CD4-positive, alpha-beta T cell (primary cell): ENCODE measurements at regions of chr22 and their contacts with region 1.

Region 1: DNA sequence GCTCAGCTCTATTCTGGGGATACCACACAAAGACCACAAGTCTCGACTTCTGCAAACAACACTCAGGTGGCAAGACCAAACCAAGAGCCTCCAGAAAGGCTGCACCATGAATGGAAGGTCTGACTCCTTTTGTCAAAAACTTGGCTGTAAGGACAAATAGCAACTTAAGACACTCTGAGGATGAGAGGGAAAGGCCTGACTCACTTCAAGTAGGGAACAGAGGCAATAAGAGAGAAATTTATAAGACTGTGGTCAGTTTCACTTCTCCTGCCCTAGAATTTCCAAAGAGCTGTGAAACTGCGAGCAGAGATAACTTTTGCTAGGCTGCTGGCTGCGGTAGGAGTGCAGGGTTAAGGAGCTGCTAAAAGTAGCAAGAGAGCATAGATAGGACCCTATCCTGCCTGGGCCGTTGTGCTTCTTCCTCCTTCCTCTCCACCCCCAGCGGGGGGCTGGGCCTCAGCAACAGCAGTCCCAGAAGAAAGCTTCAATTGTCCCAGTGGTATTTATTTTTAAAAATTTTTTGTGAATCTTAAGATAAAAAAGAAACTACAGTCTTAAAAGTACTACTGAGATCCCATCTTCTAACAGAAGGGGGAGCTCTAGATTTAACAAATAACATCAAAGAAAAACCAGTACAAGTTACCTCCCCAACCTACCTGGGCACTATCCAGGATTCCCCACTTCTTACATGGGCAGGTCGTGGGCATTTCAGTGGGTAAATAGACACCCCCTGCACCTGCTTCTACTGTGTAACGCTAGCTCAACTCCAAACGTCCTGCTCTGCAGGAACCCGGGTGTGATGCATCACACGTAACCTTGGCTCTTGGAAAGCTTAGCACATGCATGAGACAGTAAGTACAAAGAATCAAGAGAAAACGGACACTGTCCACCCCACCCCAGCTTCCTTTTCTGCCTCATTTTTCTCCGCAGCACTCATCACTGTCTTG is 66.4 kb downstream of the SGSM3 start:
- DNase-seq: peak in 5 of 14 experiments; percentile 20 to 80 (median 69)
- ATAC-seq: peak; percentile 84
- H3K4me3 ChIP-seq: no peak overlapping the region
- H3K4me3 Mint-ChIP-seq: peak overlapping the region; percentile 23
- H3K27ac ChIP-seq: peak overlapping the region in 1 of 2 donors; percentile 40
- H3K27ac Mint-ChIP-seq: peak overlapping the region; percentile 78
- H3K4me1 ChIP-seq: peaks cover 24% of the 10 kb centered on the region
- H3K4me1 Mint-ChIP-seq: peaks cover 52% of the 10 kb centered on the region
- H3K27me3 ChIP-seq: no peaks in the 10 kb centered on the region
- H3K27me3 Mint-ChIP-seq: no peaks in the 10 kb centered on the region
- CTCF ChIP-seq: peak; percentile 85

Region 2: GRCh38 chr22:40463017-40463631 is 26.3 kb after region 1 on chr22:
- CTCF ChIA-PET with region 1: interaction called, 11 read pairs
- POLR2A ChIA-PET with region 1: interaction called, 17 read pairs
- intact Hi-C with region 1: no loop called
- DNase-seq: peak; percentile 10 to 73 (median 44)
- ATAC-seq: peak; percentile 81
- H3K4me3 ChIP-seq: peak overlapping the region; percentile 79
- H3K4me3 Mint-ChIP-seq: peak overlapping the region; percentile 96
- H3K27ac ChIP-seq: peak overlapping the region; percentile 76 to 78
- H3K27ac Mint-ChIP-seq: peak overlapping the region; percentile 98
- H3K4me1 ChIP-seq: peaks cover 49% of the 10 kb centered on the region
- H3K4me1 Mint-ChIP-seq: peaks cover 87% of the 10 kb centered on the region
- H3K27me3 ChIP-seq: no peaks in the 10 kb centered on the region
- H3K27me3 Mint-ChIP-seq: no peaks in the 10 kb centered on the region
- CTCF ChIP-seq: no peak

Region 3: GRCh38 chr22:40487663-40488249 is 51.0 kb after region 1 on chr22:
- CTCF ChIA-PET with region 1: interaction called, 39 read pairs
- POLR2A ChIA-PET with region 1: interaction called, 16 read pairs
- intact Hi-C with region 1: loop called (anchors 1 kb)
- DNase-seq: peak in 3 of 14 experiments; percentile 51 to 68 (median 62)
- ATAC-seq: peak; percentile 53
- H3K4me3 ChIP-seq: no peak overlapping the region
- H3K4me3 Mint-ChIP-seq: no peak overlapping the region
- H3K27ac ChIP-seq: no peak overlapping the region
- H3K27ac Mint-ChIP-seq: peak overlapping the region; percentile 4
- H3K4me1 ChIP-seq: peaks cover 5% of the 10 kb centered on the region
- H3K4me1 Mint-ChIP-seq: peaks cover 52% of the 10 kb centered on the region
- H3K27me3 ChIP-seq: no peaks in the 10 kb centered on the region
- H3K27me3 Mint-ChIP-seq: no peaks in the 10 kb centered on the region
- CTCF ChIP-seq: peak; percentile 91

Region 4: GRCh38 chr22:40533712-40534378 is 97.1 kb after region 1 on chr22:
- CTCF ChIA-PET with region 1: interaction called, 14 read pairs
- POLR2A ChIA-PET with region 1: interaction called, 4 read pairs
- intact Hi-C with region 1: no loop called
- DNase-seq: peak; percentile 21 to 90 (median 47)
- ATAC-seq: peak; percentile 98
- H3K4me3 ChIP-seq: peak overlapping the region; percentile 54
- H3K4me3 Mint-ChIP-seq: peak overlapping the region; percentile 84
- H3K27ac ChIP-seq: peak overlapping the region; percentile 44 to 49
- H3K27ac Mint-ChIP-seq: peak overlapping the region; percentile 88
- H3K4me1 ChIP-seq: peaks cover 31% of the 10 kb centered on the region
- H3K4me1 Mint-ChIP-seq: peaks cover 71% of the 10 kb centered on the region
- H3K27me3 ChIP-seq: no peaks in the 10 kb centered on the region
- H3K27me3 Mint-ChIP-seq: no peaks in the 10 kb centered on the region
- CTCF ChIP-seq: no peak

Region 5: GRCh38 chr22:40679964-40680818 is 243.4 kb after region 1 on chr22:
- CTCF ChIA-PET with region 1: interaction called, 11 read pairs
- POLR2A ChIA-PET with region 1: no interaction called
- intact Hi-C with region 1: no loop called
- DNase-seq: no peak
- ATAC-seq: no peak
- H3K4me3 ChIP-seq: no peak overlapping the region
- H3K4me3 Mint-ChIP-seq: no peak overlapping the region
- H3K27ac ChIP-seq: no peak overlapping the region
- H3K27ac Mint-ChIP-seq: no peak overlapping the region
- H3K4me1 ChIP-seq: peaks cover 29% of the 10 kb centered on the region
- H3K4me1 Mint-ChIP-seq: peaks cover 14% of the 10 kb centered on the region
- H3K27me3 ChIP-seq: peaks cover 0 to 18% of the 10 kb centered on the region in 2 experiments
- H3K27me3 Mint-ChIP-seq: peaks cover 26% of the 10 kb centered on the region
- CTCF ChIP-seq: no peak

Region 6: GRCh38 chr22:40898850-40899357 is 462.1 kb after region 1 on chr22:
- CTCF ChIA-PET with region 1: interaction called, 3 read pairs
- POLR2A ChIA-PET with region 1: no interaction called
- intact Hi-C with region 1: loop called in 1 of 2 experiments (anchors 5 kb)
- DNase-seq: peak in 4 of 14 experiments; percentile 4 to 73 (median 68)
- ATAC-seq: peak; percentile 60
- H3K4me3 ChIP-seq: no peak overlapping the region
- H3K4me3 Mint-ChIP-seq: no peak overlapping the region
- H3K27ac ChIP-seq: no peak overlapping the region
- H3K27ac Mint-ChIP-seq: no peak overlapping the region
- H3K4me1 ChIP-seq: peaks cover 3% of the 10 kb centered on the region
- H3K4me1 Mint-ChIP-seq: peaks cover 6% of the 10 kb centered on the region
- H3K27me3 ChIP-seq: no peaks in the 10 kb centered on the region
- H3K27me3 Mint-ChIP-seq: no peaks in the 10 kb centered on the region
- CTCF ChIP-seq: peak; percentile 54